Cardiac septum (tissue), 1 donor: ENCODE measurements at regions of chr3 and their contacts with region 1.

Region 1: GRCh38 chr3:132730891-132731580 is 8.8 kb upstream of the NPHP3 start:
- DNase-seq: no peak

Region 2: DNA sequence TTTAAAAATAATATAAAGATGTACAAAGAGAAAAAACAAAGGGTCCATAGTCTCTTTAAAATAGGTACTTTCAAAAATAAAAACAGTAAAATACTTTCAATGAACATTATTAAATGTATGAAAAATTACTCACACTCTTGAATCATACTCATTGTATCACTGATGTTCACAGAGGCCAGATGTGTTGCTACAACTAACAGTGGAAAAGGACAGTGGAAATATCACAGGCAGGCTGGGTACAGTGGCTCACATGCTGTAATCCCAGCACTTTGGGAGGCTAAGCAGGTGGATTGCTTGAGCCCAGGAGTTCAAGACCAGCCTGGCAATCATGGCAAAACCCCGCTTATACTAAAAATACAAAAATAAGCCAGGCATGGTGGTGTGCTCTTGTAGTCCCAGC is 35.6 kb before region 1 on chr3:
- intact Hi-C with region 1: no loop called
- DNase-seq: no peak

Region 3: DNA sequence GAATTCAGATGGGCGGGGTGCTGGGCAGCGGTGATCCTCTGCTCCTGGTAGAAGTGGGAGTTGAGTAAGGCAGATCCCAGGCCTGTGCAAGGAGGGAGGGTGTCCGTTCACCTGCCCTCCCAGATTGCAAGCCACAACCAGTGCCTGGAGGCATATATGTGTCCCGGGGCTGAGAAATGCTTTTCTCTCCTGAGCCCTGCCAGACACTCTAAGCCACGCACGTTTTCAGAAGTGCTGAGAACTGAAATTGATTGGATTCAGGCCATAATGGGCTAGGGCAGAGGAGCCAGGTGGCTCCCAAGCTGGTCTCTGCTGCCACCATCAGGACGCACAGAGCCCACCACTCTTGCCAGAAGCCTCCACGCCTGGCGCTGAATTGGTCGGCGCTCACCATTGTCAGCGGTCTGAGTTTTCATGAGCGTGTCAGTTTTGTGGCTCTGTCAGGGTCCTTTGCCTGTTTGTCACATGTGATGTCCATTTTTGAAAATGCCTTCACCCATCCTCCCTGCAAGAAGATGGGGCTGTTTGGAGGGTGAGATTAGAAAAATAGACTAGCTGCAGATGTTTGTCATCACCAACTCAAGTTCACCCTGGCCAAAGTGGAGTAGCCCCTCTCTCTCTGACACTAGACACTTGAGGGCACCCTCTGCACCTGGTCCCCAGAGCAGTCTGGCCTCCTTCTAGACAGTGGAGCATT is 653.4 kb after region 1 on chr3:
- intact Hi-C with region 1: loop called (anchors 2 kb)
- DNase-seq: no peak

Region 4: DNA sequence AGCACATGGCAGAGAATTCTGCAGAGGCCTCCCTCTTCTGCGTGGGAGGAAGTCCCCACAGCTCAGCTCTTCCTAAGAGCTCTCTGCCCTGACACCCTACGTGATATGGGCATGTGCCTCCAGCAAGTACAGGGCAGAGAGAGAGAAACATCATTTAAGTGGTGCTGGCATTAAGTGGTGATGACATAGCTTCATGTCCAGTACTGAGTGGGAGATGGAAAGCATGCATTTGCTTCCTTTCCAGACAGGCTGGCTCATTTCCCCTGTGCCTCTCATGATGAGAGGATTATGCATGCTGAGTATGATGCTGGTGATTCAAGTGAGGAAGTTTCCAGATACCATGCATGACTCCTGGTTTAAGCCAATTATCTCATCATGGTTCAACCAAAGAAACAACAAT is 695.7 kb after region 1 on chr3:
- intact Hi-C with region 1: loop called (anchors 2 kb)
- DNase-seq: no peak